ENCODE measurements at regions of chr5 and their contacts with region 1.

Region 1: GRCh38 chr5:132238169-132238744 is 10.6 kb upstream of the P4HA2 start:
- DNase-seq: peak; percentile 84
- H3K4me3 ChIP-seq: no peak overlapping the region
- H3K27ac ChIP-seq: peak overlapping the region in 1 of 4 donors; percentile 28
- H3K4me1 ChIP-seq: no peaks in the 10 kb centered on the region
- H3K27me3 ChIP-seq: no peaks in the 10 kb centered on the region
- CTCF ChIP-seq: peak; percentile 55 to 89 (median 87)
- EP300 ChIP-seq: no peak
- POLR2A ChIP-seq: no peak

Region 2: GRCh38 chr5:132298287-132299212 is 60.3 kb after region 1 on chr5:
- intact Hi-C with region 1: loop called (anchors 2 kb)
- DNase-seq: no peak
- H3K4me3 ChIP-seq: no peak overlapping the region
- H3K27ac ChIP-seq: no peak overlapping the region
- H3K4me1 ChIP-seq: peaks cover 0 to 22% (median 13%) of the 10 kb centered on the region in 4 donors
- H3K27me3 ChIP-seq: no peaks in the 10 kb centered on the region
- CTCF ChIP-seq: no peak
- EP300 ChIP-seq: no peak
- POLR2A ChIP-seq: no peak

Region 3: GRCh38 chr5:132369474-132370180 is 131.4 kb after region 1 on chr5 and contains the start of gene SLC22A5:
- intact Hi-C with region 1: loop called (anchors 5 kb)
- DNase-seq: peak; percentile 74
- H3K4me3 ChIP-seq: peak within 1 kb of the TSS; percentile 60 to 80 (median 76)
- H3K27ac ChIP-seq: peak within 1 kb of the TSS; percentile 83 to 89 (median 87)
- H3K4me1 ChIP-seq: peaks cover 0 to 41% (median 27%) of the 10 kb centered on the region in 4 donors
- H3K27me3 ChIP-seq: no peaks in the 10 kb centered on the region
- CTCF ChIP-seq: no peak
- EP300 ChIP-seq: no peak
- POLR2A ChIP-seq: peak in 1 of 2 donors; percentile 22
- total RNA-seq, gene SLC22A5: 3.6 to 9.9 (median 6.3) TPM

Region 4: GRCh38 chr5:132576123-132576522 is 337.9 kb after region 1 on chr5:
- intact Hi-C with region 1: no loop called
- DNase-seq: no peak
- H3K4me3 ChIP-seq: no peak overlapping the region
- H3K27ac ChIP-seq: no peak overlapping the region
- H3K4me1 ChIP-seq: no peaks in the 10 kb centered on the region
- H3K27me3 ChIP-seq: no peaks in the 10 kb centered on the region
- CTCF ChIP-seq: no peak
- EP300 ChIP-seq: no peak
- POLR2A ChIP-seq: no peak

Measured in sigmoid colon (tissue), 7 donors.